Gastrocnemius medialis (tissue), 4 donors: ENCODE measurements at regions of chr7 and their contacts with region 1.

Region 1: DNA sequence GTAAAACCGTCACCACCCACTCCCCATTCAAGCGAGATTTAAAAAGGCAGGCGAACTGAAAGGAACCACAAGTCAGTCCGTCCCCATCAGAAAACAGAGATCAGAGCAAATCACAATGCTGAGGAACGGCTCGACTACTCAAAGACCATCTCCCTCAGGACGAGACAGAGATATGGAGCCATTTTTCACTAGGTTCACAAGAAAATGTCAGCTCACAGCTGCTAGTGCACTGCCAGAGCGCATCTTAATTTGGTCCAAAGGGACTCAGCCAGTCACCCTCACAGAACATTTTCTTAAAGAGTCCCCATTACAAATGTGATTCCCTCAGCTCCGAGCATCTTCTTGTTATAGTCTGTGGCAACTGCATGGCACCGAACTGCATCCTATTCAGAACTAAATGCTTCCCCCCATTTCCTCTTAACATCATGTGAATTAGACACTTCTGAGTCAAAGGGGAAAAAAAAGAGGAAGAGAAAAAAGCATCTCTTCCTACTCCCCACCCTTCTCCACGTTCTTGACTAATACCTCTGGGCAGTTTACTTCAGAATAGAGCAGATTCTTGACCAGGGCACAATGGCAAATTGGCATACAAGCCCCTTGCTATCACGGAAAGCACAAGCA is 683.9 kb downstream of the MAGI2 start:
- DNase-seq: no peak
- ATAC-seq: no peak
- H3K4me3 ChIP-seq: peak overlapping the region; percentile 36 to 49 (median 46)
- H3K27ac ChIP-seq: peak overlapping the region in 3 of 4 donors; percentile 12 to 77 (median 69)
- H3K4me1 ChIP-seq: peaks cover 25 to 48% of the 10 kb centered on the region in 2 donors
- H3K27me3 ChIP-seq: no peaks in the 10 kb centered on the region
- CTCF ChIP-seq: no peak
- POLR2A ChIP-seq: no peak

Region 2: DNA sequence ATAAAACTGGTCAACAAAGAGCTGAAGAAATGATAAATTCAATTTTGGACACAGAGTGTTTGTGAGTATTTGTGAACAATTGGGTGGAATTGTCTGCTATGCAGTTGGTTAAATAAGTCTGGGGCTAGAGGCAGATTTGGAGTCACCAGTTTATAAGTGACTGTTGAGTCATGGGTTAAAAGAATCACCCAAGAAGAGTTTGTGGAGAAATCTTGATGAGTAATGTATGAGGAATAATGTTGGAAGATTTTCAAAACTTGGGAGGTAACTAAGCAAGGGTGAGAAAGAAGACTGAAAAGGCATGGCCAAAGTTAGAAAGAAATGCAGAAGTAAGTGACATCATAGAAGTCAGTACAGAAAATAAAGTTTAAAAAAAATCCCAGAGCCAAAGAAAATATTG is 66.8 kb before region 1 on chr7:
- in situ Hi-C with region 1: no loop called
- intact Hi-C with region 1: loop called (anchors 5 kb)
- DNase-seq: no peak
- ATAC-seq: peak; percentile 39 to 83
- H3K4me3 ChIP-seq: no peak overlapping the region
- H3K27ac ChIP-seq: peak overlapping the region in 1 of 4 donors; percentile 16
- H3K4me1 ChIP-seq: peaks cover 0 to 8% of the 10 kb centered on the region in 2 donors
- H3K27me3 ChIP-seq: no peaks in the 10 kb centered on the region
- CTCF ChIP-seq: no peak
- POLR2A ChIP-seq: no peak